ENCODE measurements at regions of chr2 and their contacts with region 1.

Region 1: GRCh38 chr2:26035090-26035743 is 1.3 kb downstream of the RAB10 start:
- DNase-seq: no peak
- H3K4me3 ChIP-seq: peak overlapping the region; percentile 84 to 95 (median 84)
- H3K27ac ChIP-seq: peak overlapping the region; percentile 97
- H3K4me1 ChIP-seq: no peaks in the 10 kb centered on the region
- H3K27me3 ChIP-seq: no peaks in the 10 kb centered on the region
- CTCF ChIP-seq: no peak
- POLR2A ChIP-seq: no peak

Region 2: DNA sequence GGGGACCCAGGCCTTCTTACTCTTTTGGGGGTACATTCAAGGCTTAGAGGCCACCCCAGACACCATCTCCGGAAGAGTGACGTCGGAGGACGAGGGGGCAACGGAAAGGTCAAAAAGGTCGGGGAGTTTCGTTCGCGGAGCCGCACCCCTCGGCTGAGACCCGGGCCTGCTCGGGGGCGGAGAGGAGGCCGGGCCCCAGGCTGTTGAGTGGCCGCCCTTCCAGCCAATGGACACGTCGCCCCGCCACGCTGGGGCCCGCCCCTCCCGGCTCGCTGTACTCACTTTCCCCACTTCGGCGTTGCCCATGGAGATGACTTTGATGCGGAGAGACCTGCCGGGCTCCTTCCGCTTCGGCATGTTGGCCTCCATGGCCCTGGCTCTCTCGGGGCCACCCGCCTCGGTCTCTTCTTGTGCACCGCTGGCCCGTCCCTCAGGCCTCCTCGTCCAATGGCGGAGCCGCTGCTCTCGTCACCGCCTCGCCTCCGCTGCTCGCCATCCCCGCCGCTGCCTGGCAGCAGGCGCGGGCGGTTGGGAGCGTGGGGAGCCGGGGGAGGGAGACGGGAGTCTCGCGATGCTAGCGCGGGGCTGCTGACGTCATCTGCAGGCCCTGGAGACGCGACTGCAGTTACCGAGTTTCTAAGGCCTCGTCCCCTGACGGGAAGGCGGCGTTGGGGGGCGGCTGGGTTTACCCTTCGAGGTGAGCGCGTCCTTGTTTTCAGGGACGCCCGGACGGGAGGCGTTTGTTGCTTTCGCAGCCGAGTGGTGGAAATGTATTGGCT is 1063.5 kb before region 1 on chr2 and contains the start of gene DNAJC27:
- intact Hi-C with region 1: loop called (anchors 5 kb)
- DNase-seq: peak; percentile 97 to 98
- H3K4me3 ChIP-seq: peak within 1 kb of the TSS; percentile 65 to 80 (median 78)
- H3K27ac ChIP-seq: peak within 1 kb of the TSS; percentile 98 to 99
- H3K4me1 ChIP-seq: no peaks in the 10 kb centered on the region
- H3K27me3 ChIP-seq: no peaks in the 10 kb centered on the region
- CTCF ChIP-seq: peak in 1 of 3 donors; percentile 29
- POLR2A ChIP-seq: peak; percentile 97
- total RNA-seq, gene DNAJC27: 5.1 to 12.6 (median 10.8) TPM

Region 3: DNA sequence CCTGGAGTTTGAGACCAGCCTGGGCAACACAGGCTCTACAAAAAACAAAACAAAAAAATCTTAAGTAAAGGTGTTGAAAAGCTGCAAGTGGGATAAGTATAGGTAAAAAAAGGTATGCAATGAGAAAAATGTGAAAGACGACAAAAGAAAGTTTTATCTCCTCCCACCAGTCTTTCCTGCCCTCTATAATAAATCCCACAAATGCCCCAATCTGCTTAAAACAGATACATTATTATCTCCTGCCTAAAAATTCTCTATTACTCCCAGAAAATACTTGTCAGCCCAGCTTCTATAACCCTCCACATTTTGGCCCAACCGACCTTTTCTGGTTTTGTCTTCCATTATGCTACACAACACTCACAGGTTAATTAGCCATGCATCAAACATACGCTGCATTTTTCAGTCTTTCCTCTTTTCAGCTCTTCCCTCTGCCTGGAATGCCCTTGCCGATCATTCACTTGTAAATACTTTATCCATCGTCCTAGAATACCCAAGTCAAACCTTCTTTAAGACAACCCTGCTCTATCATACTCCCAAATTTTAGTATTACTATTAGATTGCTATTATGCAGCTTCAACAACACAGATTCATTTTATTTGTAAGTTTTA is 167.7 kb before region 1 on chr2:
- intact Hi-C with region 1: no loop called
- DNase-seq: no peak
- H3K4me3 ChIP-seq: no peak overlapping the region
- H3K27ac ChIP-seq: no peak overlapping the region
- H3K4me1 ChIP-seq: no peaks in the 10 kb centered on the region
- H3K27me3 ChIP-seq: no peaks in the 10 kb centered on the region
- CTCF ChIP-seq: no peak
- POLR2A ChIP-seq: no peak

Region 4: DNA sequence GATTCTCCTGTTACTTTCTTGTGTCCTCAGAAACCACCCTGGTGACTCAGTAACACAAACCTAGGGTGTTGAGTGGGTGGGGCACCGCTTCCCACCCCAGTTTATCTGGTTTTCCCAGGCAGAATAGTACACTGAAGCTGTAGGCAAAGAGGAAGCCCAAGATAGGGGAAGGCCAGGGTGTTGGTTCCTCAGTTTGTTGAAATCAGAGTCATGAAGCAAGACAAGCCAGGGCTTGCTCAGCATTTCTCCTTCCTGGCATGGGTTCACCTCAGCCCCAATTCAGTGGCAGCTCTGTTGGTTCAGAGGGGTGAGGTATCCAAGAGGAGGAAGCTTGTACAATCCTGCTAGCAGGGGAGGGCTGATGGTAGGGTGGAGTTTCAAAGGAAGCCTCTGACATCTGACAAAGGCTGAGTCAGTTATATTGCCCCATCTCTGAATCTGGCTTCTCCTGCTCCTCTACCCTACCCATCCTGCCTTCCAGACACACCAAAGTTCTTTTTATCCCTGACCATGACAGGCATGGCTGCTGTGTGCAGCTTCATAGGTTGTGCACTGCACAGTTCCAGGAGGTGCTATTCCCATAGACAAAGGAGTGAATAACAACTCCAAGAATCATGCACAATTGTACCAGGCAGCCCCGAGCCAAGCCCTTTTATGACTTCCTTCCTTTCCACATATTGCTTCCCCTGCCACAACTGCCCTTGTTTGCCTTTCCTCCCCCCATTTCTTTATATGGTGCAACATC is 26.2 kb before region 1 on chr2:
- intact Hi-C with region 1: no loop called
- DNase-seq: peak in 1 of 2 donors; percentile 48
- H3K4me3 ChIP-seq: no peak overlapping the region
- H3K27ac ChIP-seq: peak overlapping the region in 1 of 2 donors; percentile 19
- H3K4me1 ChIP-seq: peaks cover 0 to 5% of the 10 kb centered on the region in 2 donors
- H3K27me3 ChIP-seq: no peaks in the 10 kb centered on the region
- CTCF ChIP-seq: no peak
- POLR2A ChIP-seq: no peak

Region 5: DNA sequence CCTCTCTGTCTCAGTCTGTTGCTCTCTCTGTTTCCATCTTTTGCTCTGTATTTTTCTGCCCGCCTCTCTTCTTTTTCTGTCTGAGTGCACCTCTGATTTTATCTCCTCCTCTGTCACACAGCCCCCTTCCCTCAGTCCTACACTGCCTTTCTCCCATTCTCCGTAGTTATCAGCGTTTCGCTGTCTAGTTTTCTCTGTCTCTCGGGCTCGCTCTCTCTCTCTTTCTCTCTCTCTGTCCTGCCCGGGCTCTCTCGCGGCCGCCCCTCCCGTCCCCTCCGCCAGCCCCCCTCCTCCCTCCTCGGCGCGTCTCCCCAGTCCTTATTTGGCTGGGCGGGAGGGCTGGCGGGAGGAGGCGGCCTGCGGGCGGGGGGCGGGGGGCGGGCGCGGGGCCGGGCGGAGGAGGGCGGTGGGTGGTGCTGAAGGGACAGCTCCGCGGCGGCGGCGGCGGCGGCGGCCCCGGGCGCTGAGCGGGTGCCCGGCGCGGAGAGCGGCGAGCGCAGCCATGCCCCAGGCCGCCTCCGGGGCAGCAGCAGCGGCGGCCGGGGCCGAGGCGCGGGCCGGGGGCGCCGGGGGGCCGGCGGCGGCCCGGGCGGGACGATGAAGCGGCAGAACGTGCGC is 657.2 kb after region 1 on chr2 and contains the start of gene KCNK3:
- intact Hi-C with region 1: no loop called
- DNase-seq: peak in 1 of 2 donors; percentile 20
- H3K4me3 ChIP-seq: peak within 1 kb of the TSS; percentile 33 to 64 (median 44)
- H3K27ac ChIP-seq: peak within 1 kb of the TSS in 1 of 2 donors; percentile 36
- H3K4me1 ChIP-seq: peaks cover 0 to 7% of the 10 kb centered on the region in 2 donors
- H3K27me3 ChIP-seq: peaks cover 0 to 53% of the 10 kb centered on the region in 2 donors
- CTCF ChIP-seq: no peak
- POLR2A ChIP-seq: no peak
- total RNA-seq, gene KCNK3: 0.59 to 2.3 (median 1.4) TPM

Measured in breast epithelium (tissue), 4 donors.